HAP-1 (cell line): ENCODE measurements at regions of chr12 and their contacts with region 1.

Region 1: DNA sequence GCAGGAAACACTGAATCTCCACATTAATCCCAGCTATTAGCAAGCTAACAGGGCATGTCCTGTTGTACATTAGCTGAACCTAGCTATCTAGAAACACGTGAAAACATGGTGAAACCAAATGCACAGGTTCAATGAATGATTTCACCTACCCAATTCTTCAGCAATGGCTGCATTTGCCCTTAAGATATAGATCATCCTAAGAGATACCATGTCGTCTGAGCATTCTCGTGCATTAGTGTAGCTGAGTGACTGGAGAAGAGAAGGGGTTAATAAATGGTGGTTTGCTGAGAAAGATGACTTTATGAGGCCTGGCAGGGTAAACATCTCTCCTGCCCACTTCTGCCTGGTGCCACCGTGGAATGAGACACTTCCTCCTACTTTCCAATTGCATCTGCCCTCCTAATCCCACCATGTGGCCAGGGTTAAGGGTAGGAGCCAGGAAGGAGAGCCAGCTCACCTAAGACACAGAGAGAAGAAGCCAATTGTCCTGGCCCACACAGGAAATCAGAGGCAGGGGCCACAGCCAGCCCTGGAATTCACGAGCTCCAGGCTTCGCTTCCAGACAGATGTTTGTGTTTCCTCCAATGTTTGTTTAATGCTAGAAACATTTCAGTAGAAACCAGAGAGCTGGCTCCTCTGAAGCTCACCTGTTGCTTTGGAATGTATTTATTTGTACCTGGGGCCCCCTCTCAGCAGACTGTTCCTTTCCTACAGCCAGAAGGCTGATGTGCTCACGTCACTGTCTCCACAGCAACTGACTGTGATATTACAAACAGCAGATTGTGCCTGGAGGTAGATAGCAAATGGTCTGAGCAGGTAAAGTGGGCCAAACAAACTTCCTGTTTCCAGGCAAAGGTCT is 126.0 kb upstream of the PARP11 start:
- DNase-seq: no peak
- H3K4me3 ChIP-seq: no peak overlapping the region
- H3K4me1 ChIP-seq: no peaks in the 10 kb centered on the region
- H3K27me3 ChIP-seq: no peaks in the 10 kb centered on the region

Region 2: GRCh38 chr12:3677609-3678008 is 321.6 kb before region 1 on chr12:
- in situ Hi-C with region 1: no loop called
- DNase-seq: no peak
- H3K4me3 ChIP-seq: no peak overlapping the region
- H3K4me1 ChIP-seq: no peaks in the 10 kb centered on the region
- H3K27me3 ChIP-seq: no peaks in the 10 kb centered on the region

Region 3: GRCh38 chr12:4037747-4038312 is 38.6 kb after region 1 on chr12:
- in situ Hi-C with region 1: loop called (anchors 5 kb)
- DNase-seq: peak; percentile 34 to 66
- H3K4me3 ChIP-seq: no peak overlapping the region
- H3K4me1 ChIP-seq: peaks cover 6% of the 10 kb centered on the region; the same call in 1 of the 2 replicates
- H3K27me3 ChIP-seq: peaks cover 9% of the 10 kb centered on the region

Region 4: GRCh38 chr12:4148418-4149056 is 149.3 kb after region 1 on chr12:
- in situ Hi-C with region 1: no loop called
- DNase-seq: no peak
- H3K4me3 ChIP-seq: no peak overlapping the region
- H3K4me1 ChIP-seq: no peaks in the 10 kb centered on the region
- H3K27me3 ChIP-seq: no peaks in the 10 kb centered on the region

Region 5: DNA sequence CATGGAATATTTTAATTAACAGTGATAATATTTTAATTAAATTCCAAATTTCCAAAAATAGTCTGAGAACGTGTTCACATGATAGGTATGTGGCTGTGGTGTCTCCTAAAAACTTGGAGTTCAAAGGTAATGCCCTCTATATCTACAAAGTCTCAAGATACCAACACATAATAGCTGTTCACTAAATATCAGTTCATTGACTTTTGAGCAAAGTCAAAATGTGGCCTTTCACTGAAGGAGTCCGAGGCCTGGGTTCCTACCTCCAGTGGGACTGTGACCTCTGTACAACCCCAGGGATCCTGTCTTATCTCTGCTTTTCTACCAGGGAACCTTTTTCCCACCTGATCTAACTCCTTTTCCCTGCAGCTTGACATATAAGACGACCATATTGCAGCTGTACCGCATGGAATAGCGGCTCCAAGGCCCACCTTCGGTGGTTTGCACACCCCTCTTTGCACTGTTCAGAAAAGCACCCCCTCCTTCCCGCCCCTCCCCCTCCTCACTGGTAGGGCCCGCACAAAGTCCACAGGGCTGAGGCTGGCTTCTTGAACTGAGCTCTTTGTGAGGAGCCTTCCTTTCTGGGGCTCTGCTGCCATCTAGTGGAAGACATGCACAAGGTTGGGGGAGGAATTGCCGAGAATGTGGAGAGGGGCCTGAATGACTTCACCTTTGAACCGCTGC is 277.5 kb after region 1 on chr12:
- in situ Hi-C with region 1: loop called (anchors 10 kb)
- DNase-seq: peak; percentile 68 to 88
- H3K4me3 ChIP-seq: no peak overlapping the region
- H3K4me1 ChIP-seq: peaks cover 11% of the 10 kb centered on the region
- H3K27me3 ChIP-seq: peaks cover 51% of the 10 kb centered on the region